Activated T-helper 2 cell treated with anti-CD3 and anti-CD28 coated beads, Interferon-gamma antibody, Interleukin-2, Interleukin-4, amounts not matched to agents 10 μg/mL and 5 μg/mL and 100 μg/mL, durations not matched to agents 14 hours and 24 hours and 36 hours (primary cell): ENCODE measurements at regions of chr4 and their contacts with region 1.

Region 1: GRCh38 chr4:17324386-17324830 is 187.5 kb downstream of the QDPR start:
- DNase-seq: peak; percentile 30
- H3K4me3 Mint-ChIP-seq: peak overlapping the region; percentile 38
- H3K27ac Mint-ChIP-seq: no peak overlapping the region
- H3K4me1 Mint-ChIP-seq: peaks cover 18% of the 10 kb centered on the region
- H3K27me3 Mint-ChIP-seq: peaks cover 3% of the 10 kb centered on the region

Region 2: GRCh38 chr4:16794816-16795445 is 529.5 kb before region 1 on chr4:
- intact Hi-C with region 1: loop called (anchors 1 kb)
- DNase-seq: no peak
- H3K4me3 Mint-ChIP-seq: no peak overlapping the region
- H3K27ac Mint-ChIP-seq: no peak overlapping the region
- H3K4me1 Mint-ChIP-seq: no peaks in the 10 kb centered on the region
- H3K27me3 Mint-ChIP-seq: peaks cover 2% of the 10 kb centered on the region

Region 3: GRCh38 chr4:16916719-16917337 is 407.6 kb before region 1 on chr4:
- intact Hi-C with region 1: loop called (anchors 2 kb)
- DNase-seq: peak; percentile 72
- H3K4me3 Mint-ChIP-seq: no peak overlapping the region
- H3K27ac Mint-ChIP-seq: no peak overlapping the region
- H3K4me1 Mint-ChIP-seq: peaks cover 10% of the 10 kb centered on the region
- H3K27me3 Mint-ChIP-seq: peaks cover 2% of the 10 kb centered on the region

Region 4: DNA sequence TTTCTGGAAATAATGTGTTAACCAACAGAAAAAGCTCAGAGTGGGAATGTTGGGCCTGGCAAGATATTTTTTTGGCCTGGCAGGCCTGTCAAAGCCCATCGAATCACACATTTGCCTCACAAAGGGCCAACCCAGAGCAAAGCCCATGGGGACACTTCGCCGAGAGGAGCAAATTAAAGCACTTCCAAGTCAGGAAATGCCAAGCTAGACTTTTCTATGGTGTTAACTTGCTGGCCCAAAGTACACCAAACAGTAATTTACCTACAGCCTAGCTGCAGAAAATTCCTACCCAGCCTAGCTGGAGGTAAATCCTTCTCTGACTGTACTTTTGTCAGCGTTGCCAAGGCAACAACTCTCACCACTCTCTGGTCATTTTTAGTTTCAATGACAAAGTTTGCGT is 137.4 kb before region 1 on chr4:
- intact Hi-C with region 1: no loop called
- DNase-seq: no peak
- H3K4me3 Mint-ChIP-seq: no peak overlapping the region
- H3K27ac Mint-ChIP-seq: no peak overlapping the region
- H3K4me1 Mint-ChIP-seq: no peaks in the 10 kb centered on the region
- H3K27me3 Mint-ChIP-seq: no peaks in the 10 kb centered on the region

Region 5: DNA sequence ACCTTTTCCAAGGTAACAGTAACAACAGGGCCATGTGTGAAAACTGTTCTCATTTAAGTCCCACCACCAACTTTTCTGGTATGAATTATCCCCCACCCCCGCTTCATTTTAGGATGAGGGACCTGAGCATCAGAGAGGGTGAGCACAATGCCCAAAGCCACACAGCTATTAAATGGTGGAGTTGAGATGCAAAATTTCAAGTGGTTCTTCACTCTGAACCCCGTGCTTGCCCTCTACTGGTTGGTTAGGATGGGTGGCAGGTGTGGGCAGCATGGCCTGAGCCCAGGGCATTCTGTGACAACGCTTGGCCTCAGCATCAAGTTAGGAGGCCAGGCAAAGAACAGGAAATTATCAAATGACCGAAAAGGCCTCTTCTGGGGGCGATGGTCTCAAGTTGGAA is 323.5 kb after region 1 on chr4:
- intact Hi-C with region 1: no loop called
- DNase-seq: no peak
- H3K4me3 Mint-ChIP-seq: no peak overlapping the region
- H3K27ac Mint-ChIP-seq: no peak overlapping the region
- H3K4me1 Mint-ChIP-seq: peaks cover 4% of the 10 kb centered on the region
- H3K27me3 Mint-ChIP-seq: no peaks in the 10 kb centered on the region